ENCODE measurements at regions of chr15 and their contacts with region 1.

Region 1: DNA sequence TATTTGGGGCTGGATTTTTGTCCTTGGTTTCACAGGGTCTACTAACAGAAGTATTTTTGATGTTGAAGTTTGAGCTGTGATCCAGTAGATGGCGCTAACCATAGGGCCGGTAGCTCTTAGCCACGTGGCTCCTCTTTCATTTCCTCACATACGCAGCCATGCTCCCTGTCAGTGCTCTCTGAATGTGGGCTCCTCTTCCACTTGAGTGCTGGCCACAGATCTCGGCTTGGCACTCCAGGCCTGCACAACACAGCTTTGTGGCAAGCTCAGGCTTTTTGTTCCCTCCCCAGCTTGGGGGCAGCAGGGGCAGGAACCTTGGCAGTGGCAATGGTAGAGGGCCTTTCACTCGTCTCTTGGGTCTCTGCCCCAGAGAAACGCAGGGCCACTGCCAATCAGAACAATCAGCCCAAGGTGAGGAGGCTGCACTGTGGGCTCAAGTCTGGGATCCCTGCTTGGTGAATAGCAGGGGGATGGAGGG is 18.6 kb upstream of the DNAAF4 start:
- DNase-seq: no peak
- ATAC-seq: 0 out of 2 replicates have a peak, but pooled peaks have one; percentile 56
- H3K4me3 ChIP-seq: no peak overlapping the region
- H3K27ac ChIP-seq: no peak overlapping the region
- H3K4me1 ChIP-seq: 0 out of 2 replicates have a peak, but pooled peaks cover 3% of the 10 kb centered on the region
- H3K27me3 ChIP-seq: no peaks in the 10 kb centered on the region
- CTCF ChIP-seq: peak; percentile 73

Region 2: GRCh38 chr15:55168329-55168974 is 358.1 kb before region 1 on chr15:
- CTCF ChIA-PET with region 1: interaction called, 11 read pairs
- POLR2A ChIA-PET with region 1: no interaction called
- in situ Hi-C with region 1: no loop called
- intact Hi-C with region 1: no loop called
- DNase-seq: peak; percentile 48
- ATAC-seq: peak; percentile 98
- H3K4me3 ChIP-seq: no peak overlapping the region
- H3K27ac ChIP-seq: no peak overlapping the region
- H3K4me1 ChIP-seq: no peaks in the 10 kb centered on the region
- H3K27me3 ChIP-seq: no peaks in the 10 kb centered on the region
- CTCF ChIP-seq: peak; percentile 94

Region 3: DNA sequence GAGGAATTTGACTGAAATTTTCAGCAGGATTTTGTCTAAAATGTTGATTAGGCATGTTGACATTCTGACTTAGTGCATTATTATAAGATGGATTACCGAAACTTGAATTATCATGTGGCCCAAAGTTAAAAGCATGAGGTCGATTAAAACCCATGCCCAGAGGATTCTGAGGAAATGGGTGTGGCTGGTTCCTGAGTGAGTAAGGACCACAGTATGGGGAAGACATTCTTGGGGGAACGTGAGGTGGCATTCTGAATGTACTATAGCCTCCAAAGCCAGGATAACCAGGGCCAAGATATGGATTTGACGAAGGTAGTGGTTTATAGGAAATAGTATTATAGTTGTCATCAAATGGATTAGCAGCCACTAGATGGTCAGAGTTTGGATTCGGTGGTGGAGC is 20.1 kb after region 1 on chr15:
- CTCF ChIA-PET with region 1: no interaction called
- POLR2A ChIA-PET with region 1: interaction called, 10 read pairs
- in situ Hi-C with region 1: no loop called
- intact Hi-C with region 1: no loop called
- DNase-seq: no peak
- ATAC-seq: no peak
- H3K4me3 ChIP-seq: no peak overlapping the region
- H3K27ac ChIP-seq: no peak overlapping the region
- H3K4me1 ChIP-seq: no peaks in the 10 kb centered on the region
- H3K27me3 ChIP-seq: peaks cover 3% of the 10 kb centered on the region
- CTCF ChIP-seq: no peak

Region 4: GRCh38 chr15:55588070-55588814 is 61.6 kb after region 1 on chr15 and contains the start of gene PYGO1:
- CTCF ChIA-PET with region 1: no interaction called
- POLR2A ChIA-PET with region 1: no interaction called
- in situ Hi-C with region 1: no loop called
- intact Hi-C with region 1: loop called (anchors 10 kb)
- DNase-seq: no peak
- ATAC-seq: peak; percentile 93
- H3K4me3 ChIP-seq: peak within 1 kb of the TSS; percentile 54 to 60
- H3K27ac ChIP-seq: no peak within 1 kb of the TSS
- H3K4me1 ChIP-seq: no peaks in the 10 kb centered on the region; the same call in 1 of the 2 replicates
- H3K27me3 ChIP-seq: peaks cover 22% of the 10 kb centered on the region
- CTCF ChIP-seq: no peak; the same call in 1 of the 2 replicates
- total RNA-seq, gene PYGO1: 2.4 TPM

Region 5: DNA sequence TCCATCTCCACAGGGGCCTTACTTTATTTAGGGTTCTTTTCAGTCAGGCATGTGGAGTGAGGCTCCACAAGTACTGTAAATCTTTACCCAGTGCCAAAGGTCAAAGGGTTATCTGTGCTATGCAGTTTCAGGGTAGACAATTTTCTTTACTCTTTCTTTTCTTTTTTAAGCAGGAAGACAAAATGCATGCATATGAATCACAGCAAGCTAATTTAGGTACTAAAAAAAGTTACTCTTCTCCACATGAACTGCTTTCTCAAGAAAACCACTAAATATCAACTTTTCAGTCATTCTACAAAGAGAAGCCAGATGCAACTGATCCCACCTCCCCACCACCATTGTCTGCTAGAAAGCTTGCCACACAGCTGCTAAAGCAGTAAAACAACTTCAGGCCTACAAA is 134.8 kb after region 1 on chr15:
- CTCF ChIA-PET with region 1: no interaction called
- POLR2A ChIA-PET with region 1: no interaction called
- in situ Hi-C with region 1: no loop called
- intact Hi-C with region 1: no loop called
- DNase-seq: no peak
- ATAC-seq: no peak
- H3K4me3 ChIP-seq: no peak overlapping the region
- H3K27ac ChIP-seq: no peak overlapping the region; the same call in 1 of the 2 replicates
- H3K4me1 ChIP-seq: peaks cover 9% of the 10 kb centered on the region
- H3K27me3 ChIP-seq: no peaks in the 10 kb centered on the region
- CTCF ChIP-seq: no peak

Region 6: DNA sequence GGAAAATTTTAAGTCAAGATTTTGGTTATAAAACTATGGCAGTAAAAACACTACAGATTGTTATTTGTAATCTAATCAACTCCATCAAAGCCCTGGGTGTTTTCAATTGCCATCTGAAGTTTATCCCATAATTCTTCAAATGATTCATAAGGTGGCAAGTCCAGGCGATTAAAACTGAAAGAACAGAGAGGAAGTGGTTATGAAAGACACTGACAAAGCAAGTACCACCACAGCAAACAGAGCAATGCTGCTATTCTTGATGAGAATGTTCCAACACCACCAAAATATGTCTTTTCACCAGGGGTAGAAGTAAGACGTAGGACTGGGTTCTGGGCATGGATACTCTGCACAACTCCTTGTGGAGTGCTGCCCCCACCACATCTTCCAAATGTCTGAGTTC is 303.2 kb after region 1 on chr15:
- CTCF ChIA-PET with region 1: interaction called, 10 read pairs
- POLR2A ChIA-PET with region 1: interaction called, 9 read pairs
- in situ Hi-C with region 1: no loop called
- intact Hi-C with region 1: no loop called
- DNase-seq: no peak
- ATAC-seq: no peak
- H3K4me3 ChIP-seq: no peak overlapping the region
- H3K27ac ChIP-seq: no peak overlapping the region
- H3K4me1 ChIP-seq: no peaks in the 10 kb centered on the region
- H3K27me3 ChIP-seq: no peaks in the 10 kb centered on the region
- CTCF ChIP-seq: no peak